HCT116 (cell line): ENCODE measurements at regions of chrX and their contacts with region 1.

Region 1: GRCh38 chrX:118807151-118808017 is 16.2 kb upstream of the ZCCHC12 start:
- DNase-seq: peak; percentile 15
- ATAC-seq: peak; percentile 72
- H3K4me3 ChIP-seq: no peak overlapping the region
- H3K27ac ChIP-seq: no peak overlapping the region
- H3K4me1 ChIP-seq: no peaks in the 10 kb centered on the region
- H3K27me3 ChIP-seq: no peaks in the 10 kb centered on the region
- CTCF ChIP-seq: peak; percentile 54 to 73 (median 57)
- POLR2A ChIP-seq: no peak
- RAD21 ChIP-seq: peak; percentile 85

Region 2: DNA sequence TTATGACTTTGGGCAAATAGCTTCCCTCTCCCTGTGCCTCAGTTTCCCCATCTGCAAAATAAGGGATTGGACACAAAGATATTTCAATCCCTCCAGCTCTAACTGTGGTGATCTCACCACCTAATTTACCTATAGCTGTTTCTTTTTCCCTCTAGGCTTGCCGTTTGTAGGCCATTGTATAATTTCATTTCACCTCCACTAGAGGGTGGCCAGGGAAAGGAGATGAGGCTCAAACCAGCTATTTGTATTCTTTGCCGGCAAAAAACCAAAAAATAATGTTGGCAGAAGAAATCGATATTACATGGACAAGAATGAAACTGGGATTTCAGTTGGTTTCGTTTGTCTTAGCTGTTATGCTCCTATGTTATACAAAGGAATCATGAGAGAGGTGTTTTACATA is 347.9 kb before region 1 on chrX:
- CTCF ChIA-PET with region 1: no interaction called
- POLR2A ChIA-PET with region 1: no interaction called
- RAD21 ChIA-PET with region 1: no interaction called
- intact Hi-C with region 1: loop called (anchors 10 kb)
- DNase-seq: no peak
- ATAC-seq: peak; percentile 67
- H3K4me3 ChIP-seq: no peak overlapping the region
- H3K27ac ChIP-seq: no peak overlapping the region
- H3K4me1 ChIP-seq: no peaks in the 10 kb centered on the region
- H3K27me3 ChIP-seq: no peaks in the 10 kb centered on the region
- CTCF ChIP-seq: peak; percentile 27 to 47 (median 45); a peak in 5 of 6 replicates
- POLR2A ChIP-seq: no peak
- RAD21 ChIP-seq: peak; percentile 71

Region 3: GRCh38 chrX:118603981-118604380 is 203.4 kb before region 1 on chrX:
- CTCF ChIA-PET with region 1: interaction called, 16 read pairs
- POLR2A ChIA-PET with region 1: no interaction called
- RAD21 ChIA-PET with region 1: no interaction called
- intact Hi-C with region 1: loop called (anchors 2 kb)
- DNase-seq: peak; percentile 46
- ATAC-seq: peak; percentile 82
- H3K4me3 ChIP-seq: no peak overlapping the region
- H3K27ac ChIP-seq: no peak overlapping the region
- H3K4me1 ChIP-seq: no peaks in the 10 kb centered on the region
- H3K27me3 ChIP-seq: no peaks in the 10 kb centered on the region
- CTCF ChIP-seq: peak; percentile 47 to 70 (median 70); a peak in 5 of 6 replicates
- POLR2A ChIP-seq: no peak
- RAD21 ChIP-seq: peak; percentile 72

Region 4: DNA sequence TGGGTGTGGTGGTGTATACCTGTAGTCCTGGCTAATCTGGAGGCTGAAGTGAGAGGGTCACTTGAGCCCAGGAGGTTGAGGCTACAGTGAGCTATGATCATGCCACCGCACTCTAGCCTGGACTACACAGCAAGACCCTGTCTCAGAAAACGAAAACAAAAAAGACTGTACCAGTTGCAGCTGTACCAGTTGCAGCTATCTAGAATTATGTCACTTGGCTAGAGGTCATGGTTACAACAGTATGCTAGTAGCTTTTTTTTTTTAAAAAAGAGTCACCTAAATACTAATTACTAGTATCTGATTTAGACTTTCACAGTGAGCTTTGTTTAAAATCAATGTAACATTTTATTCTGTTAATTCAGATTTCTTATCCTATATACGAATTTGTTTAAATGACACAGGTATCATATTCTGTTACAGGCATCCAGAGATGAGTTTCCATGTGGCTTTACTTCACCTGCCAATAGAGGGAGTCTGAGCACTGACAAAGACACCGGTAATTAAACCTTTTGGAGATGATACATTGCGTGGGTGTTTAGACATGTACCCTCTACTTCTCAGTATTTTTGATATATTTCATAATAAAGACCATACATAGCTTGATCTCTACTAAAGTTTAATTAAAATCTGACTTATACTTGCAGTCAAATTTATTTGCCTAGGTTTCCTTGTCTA is 180.2 kb before region 1 on chrX:
- CTCF ChIA-PET with region 1: interaction called, 3 read pairs
- POLR2A ChIA-PET with region 1: no interaction called
- RAD21 ChIA-PET with region 1: interaction called in 1 of 2 experiments, 3 read pairs
- intact Hi-C with region 1: loop called (anchors 5 kb)
- DNase-seq: no peak
- ATAC-seq: peak; percentile 68
- H3K4me3 ChIP-seq: no peak overlapping the region
- H3K27ac ChIP-seq: no peak overlapping the region
- H3K4me1 ChIP-seq: no peaks in the 10 kb centered on the region
- H3K27me3 ChIP-seq: no peaks in the 10 kb centered on the region
- CTCF ChIP-seq: peak; percentile 28 to 59 (median 51); a peak in 5 of 6 replicates
- POLR2A ChIP-seq: no peak
- RAD21 ChIP-seq: peak; percentile 55

Region 5: DNA sequence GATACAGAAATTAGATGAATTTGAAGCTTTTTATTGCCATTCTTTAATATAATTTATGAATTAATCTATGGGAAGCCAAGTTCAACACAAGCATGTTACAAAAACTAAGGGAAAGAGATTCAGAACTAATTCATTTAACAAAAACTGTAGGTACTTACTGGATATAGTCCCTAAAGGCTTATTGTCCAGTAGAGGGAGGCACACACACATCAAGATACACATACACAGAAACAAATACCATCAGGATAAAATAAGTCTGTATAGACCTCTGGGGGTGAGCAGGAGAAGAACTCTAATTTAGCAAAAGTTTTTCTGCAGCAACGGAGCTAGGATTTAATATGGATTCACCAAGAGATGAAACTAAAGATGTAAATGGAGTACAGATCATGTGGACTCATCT is 163.0 kb before region 1 on chrX:
- CTCF ChIA-PET with region 1: interaction called, 28 read pairs
- POLR2A ChIA-PET with region 1: no interaction called
- RAD21 ChIA-PET with region 1: interaction called, 4 to 7 read pairs
- intact Hi-C with region 1: loop called (anchors 1 kb)
- DNase-seq: peak; percentile 40
- ATAC-seq: peak; percentile 88
- H3K4me3 ChIP-seq: no peak overlapping the region
- H3K27ac ChIP-seq: no peak overlapping the region
- H3K4me1 ChIP-seq: no peaks in the 10 kb centered on the region
- H3K27me3 ChIP-seq: no peaks in the 10 kb centered on the region
- CTCF ChIP-seq: peak; percentile 42 to 75 (median 49); a peak in 5 of 6 replicates
- POLR2A ChIP-seq: no peak
- RAD21 ChIP-seq: peak; percentile 71

Region 6: DNA sequence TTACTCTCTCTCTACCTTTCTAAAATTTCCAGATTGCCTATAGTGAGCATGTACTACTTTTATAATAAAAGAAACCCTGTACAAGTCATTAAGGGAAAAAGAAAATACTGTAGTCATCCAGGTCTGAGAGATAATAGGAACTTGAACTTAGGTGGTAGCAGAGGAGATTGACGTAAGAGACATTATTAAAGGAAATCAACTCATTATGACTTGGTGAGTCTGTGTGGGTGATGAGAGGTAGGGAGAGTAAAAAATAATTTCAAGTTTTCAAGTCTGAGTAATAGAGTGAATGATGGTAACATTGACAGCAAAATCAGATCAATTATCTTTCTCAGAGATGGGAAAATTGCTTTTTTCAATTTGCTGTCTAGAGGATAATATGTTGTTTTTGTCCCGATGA is 27.8 kb before region 1 on chrX:
- CTCF ChIA-PET with region 1: no interaction called
- POLR2A ChIA-PET with region 1: no interaction called
- RAD21 ChIA-PET with region 1: no interaction called
- intact Hi-C with region 1: no loop called
- DNase-seq: no peak
- ATAC-seq: no peak
- H3K4me3 ChIP-seq: no peak overlapping the region
- H3K27ac ChIP-seq: no peak overlapping the region
- H3K4me1 ChIP-seq: no peaks in the 10 kb centered on the region
- H3K27me3 ChIP-seq: no peaks in the 10 kb centered on the region
- CTCF ChIP-seq: no peak
- POLR2A ChIP-seq: no peak
- RAD21 ChIP-seq: no peak